ENCODE measurements at regions of chr20 and their contacts with region 1.

Region 1: GRCh38 chr20:31758521-31758920 is 19.4 kb downstream of the TPX2 start:
- DNase-seq: no peak
- H3K4me3 ChIP-seq: no peak overlapping the region
- H3K27ac ChIP-seq: no peak overlapping the region
- H3K4me1 ChIP-seq: no peaks in the 10 kb centered on the region
- CTCF ChIP-seq: no peak

Region 2: GRCh38 chr20:31795390-31795789 is 36.9 kb after region 1 on chr20:
- CTCF ChIA-PET with region 1: no interaction called
- POLR2A ChIA-PET with region 1: no interaction called
- intact Hi-C with region 1: loop called (anchors 5 kb)
- DNase-seq: no peak
- H3K4me3 ChIP-seq: no peak overlapping the region
- H3K27ac ChIP-seq: no peak overlapping the region
- H3K4me1 ChIP-seq: no peaks in the 10 kb centered on the region
- CTCF ChIP-seq: no peak

Region 3: DNA sequence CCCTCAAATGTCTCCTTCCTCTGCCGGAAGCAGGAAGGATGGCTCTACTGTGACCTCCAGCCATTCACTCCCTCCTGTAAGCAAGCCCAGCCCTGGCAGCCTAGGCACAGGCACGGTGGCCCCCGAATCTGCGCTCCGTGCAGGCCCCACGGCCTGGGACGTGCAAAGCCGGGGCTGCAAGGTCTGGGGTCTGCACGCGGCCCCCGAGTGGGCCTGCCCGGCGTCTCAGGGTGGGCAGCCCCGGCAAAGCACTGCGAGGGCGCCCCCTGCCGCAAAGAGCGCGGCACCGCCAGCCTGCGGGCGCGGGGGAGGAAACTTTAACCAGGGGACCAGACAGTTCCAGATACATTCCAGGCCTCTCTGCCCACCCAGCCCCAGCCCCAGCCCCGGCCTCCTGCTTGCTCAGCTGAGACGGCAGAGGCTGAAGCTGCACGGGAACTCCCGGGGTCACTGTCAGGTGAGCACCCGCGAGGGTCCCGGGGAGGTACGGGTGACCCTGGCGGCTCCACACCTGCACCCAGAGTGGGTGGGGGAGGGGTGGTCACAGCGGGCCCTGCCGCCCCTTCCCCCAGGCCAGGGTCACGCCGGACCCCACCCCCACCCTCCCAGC is 698.5 kb after region 1 on chr20:
- CTCF ChIA-PET with region 1: no interaction called
- POLR2A ChIA-PET with region 1: no interaction called
- intact Hi-C with region 1: no loop called
- DNase-seq: peak; percentile 66
- H3K4me3 ChIP-seq: peak overlapping the region; percentile 24
- H3K27ac ChIP-seq: no peak overlapping the region
- H3K4me1 ChIP-seq: peaks cover 5% of the 10 kb centered on the region
- CTCF ChIP-seq: peak; percentile 86

Measured in OCI-LY7 (cell line).